Prostate gland (tissue), 2 donors: ENCODE measurements at regions of chr17 and their contacts with region 1.

Region 1: GRCh38 chr17:2711601-2712299 is at the start of gene CLUH:
- DNase-seq: peak; percentile 92
- H3K4me3 ChIP-seq: peak within 1 kb of the TSS; percentile 71 to 83
- H3K27ac ChIP-seq: peak within 1 kb of the TSS; percentile 68 to 77
- H3K4me1 ChIP-seq: peaks cover 24% of the 10 kb centered on the region
- H3K27me3 ChIP-seq: no peaks in the 10 kb centered on the region
- CTCF ChIP-seq: peak in 1 of 4 experiments; percentile 24
- POLR2A ChIP-seq: peak; percentile 73
- total RNA-seq, gene CLUH: 68.5 to 137 TPM

Region 2: DNA sequence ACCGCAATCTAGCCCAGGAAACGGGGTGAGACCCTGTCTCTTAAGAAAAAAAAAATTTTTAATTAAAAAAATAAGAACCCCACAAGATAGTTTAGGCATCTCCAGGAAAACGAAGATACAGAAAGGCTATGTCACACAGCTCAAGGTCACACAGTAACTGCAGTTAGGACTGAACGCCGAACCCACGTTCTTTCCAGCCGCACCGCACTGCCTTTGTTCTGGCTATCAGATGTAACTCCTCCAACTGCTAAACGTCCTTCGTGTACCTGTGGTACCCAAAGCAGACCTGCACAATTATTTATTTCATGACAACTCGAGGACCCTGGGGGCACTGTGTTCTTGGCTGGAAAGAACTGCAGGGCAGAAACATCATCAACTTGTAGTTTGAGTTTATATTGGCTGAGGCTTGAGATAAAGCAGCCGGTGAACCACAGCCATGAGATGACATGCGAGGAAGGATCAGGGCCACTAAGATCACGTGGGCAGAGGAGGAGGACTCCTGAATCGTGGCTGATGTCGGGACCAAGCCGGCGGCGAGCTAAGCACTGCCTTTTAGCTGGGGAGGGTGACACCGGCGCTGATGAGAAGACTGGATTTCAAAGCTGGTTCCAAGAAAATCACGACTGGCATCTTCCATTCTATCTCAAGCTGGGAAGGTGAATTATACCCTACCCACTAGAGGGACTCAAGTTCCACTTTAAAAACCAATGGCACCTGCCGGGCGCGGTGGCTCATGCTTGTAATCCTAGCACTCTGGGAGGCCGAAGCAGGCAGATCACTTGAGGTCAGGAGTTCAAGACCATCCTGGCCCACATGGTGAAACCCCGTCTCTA is 290.2 kb before region 1 on chr17:
- intact Hi-C with region 1: loop called (anchors 10 kb)
- DNase-seq: no peak
- H3K4me3 ChIP-seq: no peak overlapping the region
- H3K27ac ChIP-seq: peak overlapping the region in 1 of 2 donors; percentile 4
- H3K4me1 ChIP-seq: no peaks in the 10 kb centered on the region
- H3K27me3 ChIP-seq: no peaks in the 10 kb centered on the region
- CTCF ChIP-seq: peak in 2 of 4 experiments; percentile 19 to 22
- POLR2A ChIP-seq: no peak

Region 3: GRCh38 chr17:2592971-2593820 is 118.6 kb before region 1 on chr17 and contains the start of gene PAFAH1B1:
- intact Hi-C with region 1: loop called (anchors 5 kb)
- DNase-seq: peak; percentile 88
- H3K4me3 ChIP-seq: peak within 1 kb of the TSS; percentile 90 to 91
- H3K27ac ChIP-seq: peak within 1 kb of the TSS; percentile 98 to 99
- H3K4me1 ChIP-seq: peaks cover 4% of the 10 kb centered on the region
- H3K27me3 ChIP-seq: no peaks in the 10 kb centered on the region
- CTCF ChIP-seq: peak in 3 of 4 experiments; percentile 25 to 54 (median 30)
- POLR2A ChIP-seq: peak; percentile 76
- total RNA-seq, gene PAFAH1B1: 47.9 to 92.9 TPM